GM18951 (cell line): ENCODE measurements at regions of chr6 and their contacts with region 1.

Region 1: DNA sequence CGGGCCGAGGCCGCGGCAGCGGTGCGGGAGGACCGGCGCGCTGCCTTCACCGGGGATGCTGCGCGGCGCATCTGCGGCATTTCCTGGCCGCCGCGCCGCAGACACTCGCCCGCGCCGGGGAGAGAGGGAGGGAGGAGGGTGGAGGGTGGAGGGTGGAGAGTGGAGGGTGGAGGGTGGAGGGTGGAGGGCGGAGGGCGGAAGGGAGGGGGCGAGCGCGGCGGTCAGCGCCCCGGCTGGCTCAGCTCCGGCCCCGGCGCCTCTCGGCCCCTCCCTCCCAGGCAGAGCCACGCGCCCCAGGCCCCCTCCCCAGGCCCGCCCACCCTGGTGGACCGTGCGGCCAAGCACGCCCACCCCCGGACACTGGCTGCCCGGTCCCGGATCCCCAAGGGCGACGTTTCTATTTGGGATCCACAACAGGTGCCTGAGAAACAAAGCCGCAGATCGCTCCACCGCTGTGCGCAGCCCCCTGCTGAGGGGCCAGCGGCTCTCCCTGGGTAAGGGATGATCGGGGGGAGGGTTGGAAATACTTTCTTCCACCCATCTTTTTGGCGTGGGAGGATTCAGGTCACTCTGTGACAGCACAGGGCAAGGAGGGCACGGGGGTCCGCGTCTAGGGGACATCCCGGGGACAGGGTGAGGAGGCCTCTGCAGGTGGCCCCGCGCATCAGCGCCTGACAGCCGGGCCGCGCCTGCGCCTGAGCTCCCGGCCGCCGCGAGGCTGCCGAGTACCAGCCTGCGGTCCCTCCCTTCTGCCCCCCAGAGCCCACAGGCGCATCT is 111.1 kb upstream of the BEND6 start:
- POLR2A ChIP-seq: peak; percentile 66

Region 2: DNA sequence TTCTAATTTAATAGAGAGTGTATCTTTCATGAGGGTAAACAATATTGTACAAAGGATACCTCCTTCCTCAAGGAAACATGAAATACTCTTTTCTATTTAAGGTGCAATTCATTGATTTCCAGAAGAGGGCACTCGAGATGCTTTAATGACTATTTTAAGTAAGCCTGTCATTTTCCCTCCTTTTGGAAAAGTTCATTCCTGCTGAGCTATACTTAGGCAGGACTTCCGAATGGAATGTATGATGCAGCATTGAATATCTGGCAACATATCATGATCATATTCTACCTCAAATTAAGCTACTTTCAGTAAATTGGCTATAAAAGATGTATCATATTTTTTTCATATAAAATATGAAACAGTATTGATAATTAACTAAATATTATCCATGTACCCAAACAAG is 206.1 kb before region 1 on chr6:
- in situ Hi-C with region 1: loop called (anchors 10 kb)
- POLR2A ChIP-seq: no peak

Region 3: GRCh38 chr6:57021086-57021720 is 177.4 kb after region 1 on chr6:
- in situ Hi-C with region 1: no loop called
- POLR2A ChIP-seq: no peak